Posterior vena cava (tissue), 2 donors: ENCODE measurements at regions of chr3 and their contacts with region 1.

Region 1: DNA sequence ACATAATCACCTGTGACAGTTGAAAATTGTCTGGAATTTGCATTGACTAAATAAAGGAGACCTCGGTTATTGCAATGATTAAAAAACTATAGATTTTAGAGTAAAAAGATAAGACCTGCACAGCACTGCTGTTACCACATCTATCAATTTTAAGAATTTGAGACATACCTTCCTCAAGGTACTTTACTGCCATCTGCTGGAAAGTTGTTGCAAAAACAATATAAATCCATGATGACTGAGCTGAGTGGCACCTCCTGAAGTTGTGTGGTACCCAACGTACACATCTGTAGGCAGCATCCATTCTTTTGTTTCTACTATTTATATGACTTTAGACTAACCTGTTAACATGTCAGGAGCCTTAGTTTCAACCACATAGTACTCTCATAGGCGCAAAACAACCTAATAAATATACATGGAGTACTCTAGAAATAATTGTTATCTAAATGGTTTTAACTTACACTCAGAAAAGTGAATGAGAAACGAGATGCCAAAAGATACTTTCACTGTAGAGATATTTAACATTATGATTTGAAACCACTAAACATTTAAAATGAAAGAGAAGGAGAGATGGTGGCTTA is 106.7 kb downstream of the GHSR start:
- DNase-seq: no peak

Region 2: GRCh38 chr3:171646357-171647133 is 695.0 kb before region 1 on chr3:
- intact Hi-C with region 1: loop called in 1 of 2 experiments (anchors 10 kb)
- DNase-seq: no peak

Region 3: GRCh38 chr3:172087602-172088580 is 253.7 kb before region 1 on chr3:
- intact Hi-C with region 1: no loop called
- DNase-seq: no peak